ENCODE measurements at regions of chr3 and their contacts with region 1.

Region 1: DNA sequence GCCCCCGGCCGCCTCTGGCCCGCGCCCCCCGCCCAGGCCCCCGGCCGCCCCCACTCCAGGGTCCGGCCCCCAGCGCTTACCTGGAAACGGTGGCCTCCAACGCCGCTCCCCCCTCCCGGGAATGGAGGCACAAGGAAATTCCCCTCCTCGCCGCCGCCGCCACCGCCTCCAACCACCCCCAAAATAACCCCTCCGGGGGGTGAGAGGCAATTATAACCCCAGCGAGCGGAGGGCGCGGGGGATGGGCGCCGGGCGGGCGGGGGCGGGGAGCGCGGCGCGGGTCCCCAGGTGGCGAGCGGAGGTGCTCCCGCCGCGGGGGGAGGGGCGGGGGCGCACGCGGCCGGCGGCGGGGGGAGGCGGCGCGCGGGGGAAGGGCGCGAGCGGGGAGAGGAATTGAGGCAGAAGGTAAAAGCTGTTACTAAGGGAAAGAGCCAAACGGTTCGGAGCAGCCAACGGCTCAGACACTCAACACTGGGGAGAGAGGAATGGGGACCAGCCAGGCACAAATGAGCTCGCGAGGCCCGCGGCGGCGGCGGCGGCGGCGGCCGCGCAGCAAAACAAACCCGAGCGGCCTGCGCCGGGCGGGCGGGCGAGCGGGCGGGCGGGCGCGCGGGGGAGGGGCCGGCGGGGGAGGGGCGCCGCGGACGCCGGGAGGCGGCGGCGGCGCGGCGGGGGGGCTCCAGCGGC is at the start of gene TBL1XR1:
- DNase-seq: peak; percentile 92 to 95 (median 95)
- ATAC-seq: peak; percentile 81 to 92 (median 89)
- H3K4me3 ChIP-seq: peak within 1 kb of the TSS; percentile 72 to 96 (median 90)
- H3K27ac ChIP-seq: peak within 1 kb of the TSS; percentile 96 to 99 (median 98)
- H3K4me1 ChIP-seq: peaks cover 0 to 58% (median 23%) of the 10 kb centered on the region in 12 donors
- H3K27me3 ChIP-seq: no peaks in the 10 kb centered on the region
- CTCF ChIP-seq: no peak
- POLR2A ChIP-seq: no peak
- total RNA-seq, gene TBL1XR1: 50.0 to 176 (median 120) TPM

Region 2: GRCh38 chr3:177126015-177126773 is 71.0 kb before region 1 on chr3:
- intact Hi-C with region 1: loop called in 3 of 10 experiments (anchors 5 to 10 kb)
- DNase-seq: no peak
- ATAC-seq: peak; percentile 53 to 88 (median 76)
- H3K4me3 ChIP-seq: no peak overlapping the region
- H3K27ac ChIP-seq: peak overlapping the region in 7 of 12 donors; percentile 2 to 29 (median 24)
- H3K4me1 ChIP-seq: peaks cover 0 to 66% (median 44%) of the 10 kb centered on the region in 12 donors
- H3K27me3 ChIP-seq: no peaks in the 10 kb centered on the region
- CTCF ChIP-seq: no peak
- POLR2A ChIP-seq: no peak

Region 3: DNA sequence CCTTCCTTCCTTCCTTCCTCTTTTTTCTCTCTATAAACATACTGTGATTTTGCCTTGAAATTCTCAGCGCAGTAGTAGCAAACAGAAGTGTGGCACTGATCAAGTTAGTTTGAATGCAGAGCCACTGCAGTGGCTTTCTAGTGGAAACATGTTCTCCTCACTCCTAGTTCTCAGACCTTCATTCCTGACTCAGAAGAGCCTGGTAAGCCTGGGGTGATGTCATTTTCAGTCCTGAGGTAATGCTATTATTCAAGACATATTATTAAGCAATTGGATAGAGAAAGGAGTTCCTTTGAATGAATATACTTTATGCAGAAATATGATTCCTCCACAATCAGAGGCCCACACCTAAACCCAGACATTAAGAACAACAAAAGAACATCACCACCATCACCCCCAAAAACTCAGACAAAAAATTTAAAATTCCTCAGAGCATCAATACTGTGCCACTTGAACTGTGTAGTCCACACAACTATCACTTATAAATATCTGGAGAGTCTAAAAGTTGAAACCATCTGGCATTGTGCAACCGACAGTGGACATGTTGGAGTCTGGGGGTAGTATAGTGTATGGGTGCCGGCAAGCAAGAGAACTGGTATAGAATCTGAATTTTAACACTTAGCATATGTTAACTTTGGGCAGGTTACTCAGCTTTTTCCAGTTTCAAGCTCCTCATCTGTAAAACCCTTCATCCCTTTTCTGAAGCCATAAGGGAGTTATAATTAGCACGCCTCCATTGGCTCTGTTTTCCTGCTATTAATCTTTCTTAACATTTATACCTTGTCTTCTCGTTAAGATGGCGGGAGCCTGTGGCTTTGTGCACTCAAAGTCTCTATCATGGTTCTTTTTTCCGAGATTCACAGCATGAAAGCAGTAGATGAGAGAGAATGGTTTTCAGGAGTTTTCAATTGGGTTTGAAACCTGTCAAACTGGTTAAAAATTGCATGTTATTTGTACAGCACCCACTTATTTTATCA is 255.6 kb after region 1 on chr3:
- intact Hi-C with region 1: loop called in 1 of 10 experiments (anchors 10 kb)
- DNase-seq: no peak
- ATAC-seq: peak in 3 of 4 donors; percentile 50 to 86 (median 58)
- H3K4me3 ChIP-seq: no peak overlapping the region
- H3K27ac ChIP-seq: peak overlapping the region in 2 of 12 donors; percentile 24 to 79
- H3K4me1 ChIP-seq: peaks cover 3 to 47% (median 12%) of the 10 kb centered on the region in 12 donors
- H3K27me3 ChIP-seq: no peaks in the 10 kb centered on the region
- CTCF ChIP-seq: no peak
- POLR2A ChIP-seq: no peak

Region 4: GRCh38 chr3:177597311-177598096 is 400.3 kb after region 1 on chr3:
- intact Hi-C with region 1: loop called in 1 of 10 experiments (anchors 10 kb)
- DNase-seq: peak in 4 of 5 donors; percentile 40 to 51 (median 45)
- ATAC-seq: peak; percentile 61 to 80 (median 72)
- H3K4me3 ChIP-seq: peak overlapping the region in 2 of 12 donors; percentile 1 to 20
- H3K27ac ChIP-seq: peak overlapping the region; percentile 31 to 78 (median 52)
- H3K4me1 ChIP-seq: peaks cover 3 to 87% (median 31%) of the 10 kb centered on the region in 12 donors
- H3K27me3 ChIP-seq: no peaks in the 10 kb centered on the region
- CTCF ChIP-seq: no peak
- POLR2A ChIP-seq: no peak

Region 5: DNA sequence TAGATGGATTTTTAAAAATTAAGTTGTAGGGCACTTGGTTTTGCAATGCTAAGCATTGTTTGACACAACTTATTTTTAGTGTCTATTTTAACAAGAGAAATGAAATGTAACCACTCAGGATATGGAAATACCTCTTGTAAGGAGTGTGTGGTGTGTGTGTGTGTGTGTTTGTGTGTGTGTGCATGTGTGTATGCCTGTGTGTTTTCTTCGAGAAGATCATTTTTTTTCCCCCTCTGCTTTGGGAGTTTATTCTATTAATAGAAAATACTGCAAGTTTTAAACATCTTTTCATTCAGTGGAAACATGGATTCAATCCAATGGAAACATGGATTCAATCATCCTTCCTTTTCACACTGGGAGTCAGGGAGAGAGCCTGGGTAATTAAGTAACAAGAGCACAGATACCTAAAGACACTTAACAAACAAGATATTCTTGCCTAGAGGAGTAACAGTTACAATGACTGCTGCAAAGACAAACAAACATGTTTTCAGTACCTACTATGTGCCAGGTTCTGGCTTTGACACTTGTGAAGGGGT is 567.3 kb after region 1 on chr3:
- intact Hi-C with region 1: loop called in 1 of 10 experiments (anchors 10 kb)
- DNase-seq: no peak
- ATAC-seq: peak; percentile 79 to 92 (median 90)
- H3K4me3 ChIP-seq: no peak overlapping the region
- H3K27ac ChIP-seq: peak overlapping the region in 11 of 12 donors; percentile 39 to 80 (median 57)
- H3K4me1 ChIP-seq: peaks cover 0 to 22% (median 8%) of the 10 kb centered on the region in 12 donors
- H3K27me3 ChIP-seq: no peaks in the 10 kb centered on the region
- CTCF ChIP-seq: no peak
- POLR2A ChIP-seq: no peak

Region 6: DNA sequence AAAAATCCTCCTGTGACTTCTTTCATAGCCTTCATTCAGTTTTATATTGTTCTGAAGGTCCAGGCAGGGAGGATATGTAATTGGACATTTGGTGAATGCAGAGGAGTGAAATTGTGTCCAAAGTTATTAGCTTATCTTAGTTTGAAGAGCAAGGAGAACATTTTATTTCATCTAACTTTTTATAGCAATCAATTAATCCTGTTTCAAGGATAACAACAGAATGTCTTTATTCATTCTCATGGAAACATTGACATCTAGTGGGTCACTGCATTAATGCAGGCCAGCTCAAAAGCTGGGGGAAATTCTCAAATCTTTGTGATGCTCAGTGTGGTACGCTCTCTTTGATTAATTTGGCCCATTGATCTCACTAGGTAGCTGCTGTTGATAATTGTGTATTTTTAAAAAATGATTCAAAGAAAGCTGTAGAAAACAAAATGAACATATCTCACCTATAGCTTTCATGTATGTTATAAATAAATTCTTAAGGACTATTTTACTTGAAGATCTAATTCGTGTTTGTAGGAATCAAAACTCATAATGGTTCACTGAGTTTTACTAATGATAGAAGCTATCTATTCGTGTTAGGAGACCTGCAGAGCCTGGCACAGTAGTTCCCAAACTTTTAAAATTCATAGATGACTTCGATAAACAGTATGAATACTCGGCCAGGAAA is 1188.2 kb after region 1 on chr3:
- intact Hi-C with region 1: loop called in 1 of 10 experiments (anchors 5 kb)
- DNase-seq: no peak
- ATAC-seq: peak in 3 of 4 donors; percentile 64 to 74 (median 72)
- H3K4me3 ChIP-seq: peak overlapping the region in 6 of 12 donors; percentile 1 to 34 (median 6)
- H3K27ac ChIP-seq: peak overlapping the region in 8 of 12 donors; percentile 20 to 75 (median 56)
- H3K4me1 ChIP-seq: peaks cover 0 to 41% (median 22%) of the 10 kb centered on the region in 12 donors
- H3K27me3 ChIP-seq: no peaks in the 10 kb centered on the region
- CTCF ChIP-seq: peak; percentile 64 to 94 (median 84)
- POLR2A ChIP-seq: no peak